Activated CD4-positive, alpha-beta memory T cell treated with anti-CD3 and anti-CD28 coated beads, Interleukin-2, amount 10 ng/mL, durations not matched to agents 7 days and 5 days (primary cell): ENCODE measurements at regions of chr1 and their contacts with region 1.

Region 1: GRCh38 chr1:150973826-150974579 is 632 bp downstream of the CERS2 start:
- DNase-seq: peak; percentile 46
- H3K4me3 Mint-ChIP-seq: peak overlapping the region; percentile 86
- H3K27ac Mint-ChIP-seq: peak overlapping the region; percentile 74
- H3K4me1 Mint-ChIP-seq: peaks cover 67% of the 10 kb centered on the region
- H3K27me3 Mint-ChIP-seq: no peaks in the 10 kb centered on the region

Region 2: GRCh38 chr1:150961799-150962198 is 12.2 kb before region 1 on chr1:
- CTCF ChIA-PET with region 1: interaction called, 15 read pairs
- POLR2A ChIA-PET with region 1: interaction called, 14 read pairs
- DNase-seq: no peak
- H3K4me3 Mint-ChIP-seq: no peak overlapping the region
- H3K27ac Mint-ChIP-seq: no peak overlapping the region
- H3K4me1 Mint-ChIP-seq: peaks cover 6% of the 10 kb centered on the region
- H3K27me3 Mint-ChIP-seq: no peaks in the 10 kb centered on the region